ENCODE measurements at regions of chr2 and their contacts with region 1.

Region 1: DNA sequence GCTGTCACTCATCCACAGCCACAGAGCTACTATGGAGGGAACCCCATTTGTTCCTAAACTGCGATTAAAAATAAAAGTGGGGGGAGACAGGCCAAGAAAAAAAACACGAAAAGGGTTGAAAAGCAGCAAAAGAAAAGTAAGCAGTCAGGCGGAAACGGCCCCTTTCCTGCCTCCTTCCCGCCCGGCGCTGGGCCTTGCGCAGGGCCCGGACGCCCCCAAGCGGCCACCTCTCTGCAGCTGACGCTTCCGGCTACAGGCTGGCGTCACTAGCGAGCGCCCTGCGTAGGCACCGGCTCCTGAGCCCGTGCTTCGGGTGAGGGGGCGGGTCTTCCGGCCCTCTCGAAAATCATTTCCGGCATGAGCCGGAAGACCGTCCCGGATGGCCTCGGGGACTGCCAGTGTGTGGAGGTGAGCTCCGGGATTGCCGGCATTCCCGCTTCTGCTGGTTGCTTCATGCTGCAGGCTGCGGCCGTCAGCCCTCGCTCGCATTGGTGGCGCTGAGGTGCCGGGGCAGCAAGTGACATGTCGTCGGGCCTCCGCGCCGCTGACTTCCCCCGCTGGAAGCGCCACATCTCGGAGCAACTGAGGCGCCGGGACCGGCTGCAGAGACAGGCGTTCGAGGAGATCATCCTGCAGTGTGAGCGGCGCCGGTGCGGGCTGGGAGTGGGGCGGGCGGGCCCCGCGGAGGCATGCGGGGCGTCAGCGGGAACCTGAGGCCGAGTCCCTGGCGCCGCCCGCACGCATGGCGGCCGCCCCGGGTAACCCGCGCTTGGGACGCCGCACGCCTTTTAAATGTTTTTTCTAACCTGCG is at the start of gene ATG16L1:
- DNase-seq: peak; percentile 95 to 96
- H3K4me3 ChIP-seq: peak within 1 kb of the TSS; percentile 99
- H3K4me1 ChIP-seq: peaks cover 6% of the 10 kb centered on the region
- H3K27me3 ChIP-seq: no peaks in the 10 kb centered on the region

Region 2: DNA sequence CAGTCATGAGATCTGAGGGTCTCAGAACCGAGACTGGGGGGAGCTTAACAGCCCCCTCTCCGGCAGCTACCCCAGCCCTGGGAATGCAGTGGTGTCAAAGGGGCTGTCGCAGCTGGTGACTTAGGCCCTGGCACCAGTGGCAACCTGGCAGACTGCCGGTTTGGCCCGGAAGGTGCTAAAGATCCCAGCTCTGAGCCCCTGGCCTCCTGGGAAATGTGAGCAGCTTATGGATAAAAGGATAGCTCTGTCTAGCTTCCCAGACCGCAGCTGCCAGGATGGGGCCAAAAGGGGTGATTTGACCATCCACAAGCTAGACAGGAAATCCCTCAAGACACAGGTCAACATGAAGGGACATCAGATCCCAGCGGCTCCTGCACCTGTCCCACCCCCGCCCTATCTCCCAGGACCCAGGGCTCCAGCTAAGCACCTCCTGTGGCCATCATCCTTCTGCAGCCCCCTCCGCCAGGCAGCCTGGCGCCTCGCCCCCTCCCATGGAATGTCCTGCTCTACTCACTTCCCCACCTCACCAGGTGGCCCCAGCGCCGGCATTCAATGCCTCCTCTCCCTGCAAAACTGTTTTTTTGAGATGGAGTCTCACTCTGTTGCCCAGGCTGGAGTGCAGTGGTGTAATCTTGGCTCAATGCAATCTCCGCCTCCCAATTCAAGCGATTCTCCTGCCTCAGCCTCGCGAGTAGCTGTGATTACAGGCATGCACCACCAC is 651.3 kb before region 1 on chr2:
- in situ Hi-C with region 1: loop called (anchors 10 kb)
- DNase-seq: no peak
- H3K4me3 ChIP-seq: no peak overlapping the region
- H3K4me1 ChIP-seq: no peaks in the 10 kb centered on the region
- H3K27me3 ChIP-seq: no peaks in the 10 kb centered on the region

Region 3: DNA sequence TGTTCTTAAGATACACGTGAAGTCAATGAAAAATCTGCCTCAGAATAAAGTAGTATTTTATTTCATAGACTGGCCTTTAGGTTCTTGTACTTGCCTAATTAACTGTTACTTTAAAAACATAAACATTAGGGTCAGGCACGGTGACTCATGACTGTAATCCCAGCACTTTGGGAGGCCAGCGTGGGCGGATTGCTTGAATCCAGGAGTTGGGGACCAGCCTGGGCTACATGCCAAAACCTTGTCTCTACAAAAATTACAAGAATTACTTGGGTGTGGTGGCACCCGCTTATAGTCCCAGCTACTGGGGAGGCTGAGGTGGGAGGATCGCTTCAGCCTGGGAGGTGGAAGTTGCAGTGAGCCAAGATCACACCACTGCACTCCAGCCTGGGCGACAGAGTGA is 397.4 kb before region 1 on chr2:
- in situ Hi-C with region 1: loop called (anchors 5 kb)
- DNase-seq: no peak
- H3K4me3 ChIP-seq: no peak overlapping the region
- H3K4me1 ChIP-seq: no peaks in the 10 kb centered on the region
- H3K27me3 ChIP-seq: no peaks in the 10 kb centered on the region

Region 4: GRCh38 chr2:232979871-232980461 is 271.5 kb before region 1 on chr2:
- in situ Hi-C with region 1: no loop called
- DNase-seq: no peak
- H3K4me3 ChIP-seq: no peak overlapping the region
- H3K4me1 ChIP-seq: no peaks in the 10 kb centered on the region
- H3K27me3 ChIP-seq: no peaks in the 10 kb centered on the region